ENCODE measurements at regions of chr4 and their contacts with region 1.

Region 1: DNA sequence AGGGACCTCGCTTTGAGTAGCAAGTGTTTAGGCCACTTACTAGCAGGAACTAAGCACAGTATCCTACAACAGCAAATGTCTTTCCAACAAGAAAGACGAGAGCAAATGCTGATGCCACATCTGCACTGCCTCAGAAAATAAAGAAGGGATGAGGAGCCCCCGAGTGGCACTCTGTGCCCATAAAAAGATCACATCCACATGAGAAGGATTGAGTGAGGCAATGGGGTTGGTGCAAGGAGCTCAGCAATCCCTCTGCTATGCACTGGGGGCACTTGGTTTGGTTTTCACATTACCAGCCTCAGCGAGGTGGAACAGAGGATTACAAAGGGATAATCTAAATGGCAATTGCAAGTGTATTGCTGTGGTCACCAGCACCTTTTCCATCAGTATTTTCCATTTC is 252.8 kb upstream of the SLC7A11 start:
- DNase-seq: peak; percentile 46
- ATAC-seq: peak; percentile 97
- H3K4me3 ChIP-seq: no peak overlapping the region
- H3K27ac ChIP-seq: no peak overlapping the region
- H3K4me1 ChIP-seq: no peaks in the 10 kb centered on the region
- H3K27me3 ChIP-seq: no peaks in the 10 kb centered on the region
- CTCF ChIP-seq: peak; percentile 44
- POLR2A ChIP-seq: no peak
- RAD21 ChIP-seq: peak; percentile 52

Region 2: DNA sequence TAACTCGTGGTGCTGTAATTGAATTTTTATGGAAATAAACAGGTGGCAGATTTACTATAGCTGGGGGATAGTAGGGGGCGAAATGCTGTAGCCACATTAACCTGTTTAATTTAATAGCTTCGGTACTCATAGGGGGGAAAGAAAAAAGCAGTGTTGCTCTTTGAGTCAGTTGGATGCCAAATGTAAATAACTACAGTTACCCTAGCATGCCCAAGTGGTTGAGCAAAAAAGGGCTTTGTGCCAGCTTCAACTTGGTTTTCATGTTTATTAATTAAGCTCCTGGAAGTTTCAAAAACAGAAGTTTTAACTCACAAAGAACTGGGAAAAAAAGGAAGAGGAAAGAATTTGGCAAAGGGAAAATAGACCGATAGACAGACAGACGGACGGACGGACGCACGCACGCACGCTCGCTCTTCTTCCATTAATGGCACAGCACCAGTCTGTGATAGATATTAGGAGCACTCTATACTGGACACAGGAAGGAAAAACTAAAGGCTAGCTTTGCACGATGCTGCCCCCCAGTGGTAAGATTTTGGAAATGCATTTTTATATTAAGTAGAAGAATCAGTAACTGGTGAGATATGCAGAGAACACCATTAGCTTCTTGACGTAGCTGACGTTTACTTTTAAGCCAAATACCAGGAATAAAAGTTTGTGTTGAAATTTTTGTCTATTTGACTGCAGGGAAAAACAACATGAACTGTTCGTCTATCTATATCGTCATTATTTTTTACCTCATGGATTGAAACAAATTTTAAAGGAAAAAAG is 404.6 kb before region 1 on chr4:
- CTCF ChIA-PET with region 1: no interaction called
- POLR2A ChIA-PET with region 1: interaction called, 15 read pairs
- dilution Hi-C with region 1: no loop called
- in situ Hi-C with region 1: no loop called
- intact Hi-C with region 1: no loop called
- DNase-seq: peak; percentile 83
- ATAC-seq: peak; percentile 96
- H3K4me3 ChIP-seq: peak overlapping the region; percentile 34
- H3K27ac ChIP-seq: peak overlapping the region; percentile 57
- H3K4me1 ChIP-seq: 0 out of 2 replicates have a peak, but pooled peaks cover 2% of the 10 kb centered on the region
- H3K27me3 ChIP-seq: no peaks in the 10 kb centered on the region
- CTCF ChIP-seq: peak; percentile 87
- POLR2A ChIP-seq: no peak
- RAD21 ChIP-seq: peak; percentile 93

Region 3: DNA sequence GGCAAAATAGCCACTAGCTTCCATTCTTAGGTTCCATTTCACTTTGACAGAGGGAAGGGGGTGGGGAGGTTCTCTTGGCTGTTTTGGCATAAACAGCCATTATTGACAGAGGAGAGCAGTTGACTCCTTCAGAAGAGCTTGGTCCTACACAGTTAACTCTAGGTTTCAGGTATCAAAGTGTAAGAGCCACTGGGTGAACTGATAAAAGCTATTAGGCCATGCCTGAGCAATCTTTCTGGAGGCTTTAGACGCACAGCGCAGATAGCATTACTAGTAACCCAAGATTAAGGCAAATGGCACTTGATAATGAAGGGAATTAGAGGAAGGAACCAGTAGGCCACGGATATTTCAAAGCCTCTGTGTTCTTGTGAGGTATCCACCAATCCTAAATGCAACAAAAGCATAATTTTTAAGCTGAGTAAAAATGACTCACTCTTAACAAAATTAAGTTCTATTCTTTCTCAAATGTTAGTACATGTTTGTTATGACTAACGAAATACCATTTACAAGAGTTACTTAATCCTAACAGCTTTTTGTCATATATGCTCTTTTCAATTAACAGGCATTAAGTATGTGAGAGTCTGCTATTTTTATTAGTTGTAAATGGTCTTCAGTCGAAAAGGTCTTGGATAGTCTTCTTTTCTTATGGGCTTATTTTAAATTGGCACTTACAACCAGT is 306.4 kb before region 1 on chr4:
- CTCF ChIA-PET with region 1: no interaction called
- POLR2A ChIA-PET with region 1: no interaction called
- dilution Hi-C with region 1: no loop called
- in situ Hi-C with region 1: no loop called
- intact Hi-C with region 1: loop called (anchors 5 kb)
- DNase-seq: peak; percentile 39
- ATAC-seq: peak; percentile 30; the same call in 1 of the 2 replicates
- H3K4me3 ChIP-seq: no peak overlapping the region
- H3K27ac ChIP-seq: 0 out of 2 replicates have a peak overlapping the region, but pooled peaks have one; percentile 2
- H3K4me1 ChIP-seq: peaks cover 6% of the 10 kb centered on the region; the same call in 1 of the 2 replicates
- H3K27me3 ChIP-seq: no peaks in the 10 kb centered on the region
- CTCF ChIP-seq: no peak
- POLR2A ChIP-seq: no peak
- RAD21 ChIP-seq: no peak

Region 4: DNA sequence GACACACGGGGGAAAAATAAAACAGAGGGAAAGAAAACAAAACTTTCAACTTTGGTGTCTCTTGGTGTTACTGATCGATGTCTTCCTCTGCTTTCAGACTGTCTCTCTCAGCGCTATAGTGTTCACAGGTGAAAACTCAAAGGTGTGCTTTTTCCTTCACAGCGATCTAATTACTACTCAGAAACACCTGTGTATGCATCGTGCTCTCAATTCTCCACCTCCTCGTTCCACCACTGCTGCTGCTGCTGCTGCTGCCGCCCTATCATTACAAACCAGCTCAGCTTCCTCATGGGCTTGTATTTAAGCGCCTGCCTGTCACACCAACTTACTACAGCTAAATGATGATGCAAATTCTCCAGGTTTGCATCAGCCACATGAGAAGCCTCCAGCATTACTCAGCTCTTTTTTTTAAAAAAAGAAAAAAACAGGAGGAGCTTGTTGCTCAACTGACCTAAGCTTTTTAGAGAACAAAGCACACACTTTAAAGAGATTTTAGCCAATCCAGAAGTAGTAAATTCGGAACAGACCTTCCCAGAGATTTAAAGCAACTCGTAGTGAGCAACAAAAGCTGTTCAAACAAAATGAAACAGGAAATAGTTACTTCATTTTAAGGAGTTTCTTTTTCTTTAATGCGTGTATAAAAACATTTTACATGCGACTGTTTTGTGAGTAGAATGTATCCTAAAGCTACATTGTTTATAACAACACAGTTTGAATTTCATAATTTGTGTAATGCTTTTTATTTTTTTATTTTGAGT is 252.7 kb before region 1 on chr4 and contains the start of gene SLC7A11:
- CTCF ChIA-PET with region 1: no interaction called
- POLR2A ChIA-PET with region 1: no interaction called
- dilution Hi-C with region 1: no loop called
- in situ Hi-C with region 1: no loop called
- intact Hi-C with region 1: loop called (anchors 2 kb)
- DNase-seq: peak; percentile 100
- ATAC-seq: peak; percentile 87
- H3K4me3 ChIP-seq: peak within 1 kb of the TSS; percentile 75
- H3K27ac ChIP-seq: peak within 1 kb of the TSS; percentile 92
- H3K4me1 ChIP-seq: peaks cover 4% of the 10 kb centered on the region; the same call in 1 of the 2 replicates
- H3K27me3 ChIP-seq: no peaks in the 10 kb centered on the region
- CTCF ChIP-seq: 0 out of 2 replicates have a peak, but pooled peaks have one; percentile 3
- POLR2A ChIP-seq: peak; percentile 95
- RAD21 ChIP-seq: peak; percentile 17
- total RNA-seq, gene SLC7A11: 24.7 and 35.6 TPM in 2 replicates